ENCODE measurements at regions of chr2 and their contacts with region 1.

Region 1: GRCh38 chr2:56183643-56184499 is at the start of gene CCDC85A:
- DNase-seq: peak; percentile 46
- ATAC-seq: peak; percentile 99
- H3K4me3 ChIP-seq: peak within 1 kb of the TSS; percentile 17 to 70 (median 47); a peak in 4 of 6 replicates
- H3K27ac ChIP-seq: no peak within 1 kb of the TSS
- H3K4me1 ChIP-seq: 0 out of 2 replicates have a peak, but pooled peaks cover 5% of the 10 kb centered on the region
- H3K27me3 ChIP-seq: peaks cover 11 to 48% of the 10 kb centered on the region in 2 experiments
- CTCF ChIP-seq: peak; percentile 97
- EP300 ChIP-seq: no peak
- POLR2A ChIP-seq: no peak
- RAD21 ChIP-seq: peak; percentile 93
- total RNA-seq, gene CCDC85A: not detected in 2 replicates

Region 2: DNA sequence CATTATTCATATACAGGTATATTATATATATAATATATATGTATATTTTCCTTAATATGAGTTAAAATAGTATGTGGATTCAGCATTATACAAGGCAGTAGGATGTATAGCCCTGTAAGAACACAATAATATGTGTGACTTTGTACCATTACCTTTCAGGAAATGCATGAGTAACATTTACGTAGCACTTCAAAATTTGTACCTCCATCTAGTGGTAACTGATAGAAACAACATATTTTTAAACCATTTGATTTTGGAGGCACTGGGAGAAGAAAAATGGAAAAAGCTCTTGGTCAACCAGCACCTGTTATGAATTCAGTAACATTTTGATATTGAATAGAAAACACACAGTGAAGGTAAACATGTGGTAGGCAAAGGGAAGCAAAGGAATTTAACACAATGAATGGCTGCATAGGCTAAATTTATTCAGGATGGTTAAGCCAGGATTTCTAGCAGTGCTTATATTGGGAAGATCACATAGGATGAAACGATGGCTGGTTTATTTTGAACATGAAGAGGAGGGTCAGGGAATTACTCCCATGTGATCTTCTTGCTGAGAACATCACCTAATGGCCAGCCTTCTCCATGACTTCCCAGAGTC is 565.4 kb after region 1 on chr2:
- CTCF ChIA-PET with region 1: interaction called, 12 read pairs
- POLR2A ChIA-PET with region 1: no interaction called
- in situ Hi-C with region 1: no loop called
- intact Hi-C with region 1: loop called (anchors 1 kb)
- DNase-seq: peak; percentile 18
- ATAC-seq: peak; percentile 27; the same call in 1 of the 3 replicates
- H3K4me3 ChIP-seq: no peak overlapping the region
- H3K27ac ChIP-seq: no peak overlapping the region
- H3K4me1 ChIP-seq: no peaks in the 10 kb centered on the region
- H3K27me3 ChIP-seq: no peaks in the 10 kb centered on the region
- CTCF ChIP-seq: peak; percentile 46
- EP300 ChIP-seq: no peak
- POLR2A ChIP-seq: no peak
- RAD21 ChIP-seq: no peak

Region 3: GRCh38 chr2:57497489-57498096 is 1313.7 kb after region 1 on chr2:
- CTCF ChIA-PET with region 1: interaction called, 13 read pairs
- POLR2A ChIA-PET with region 1: no interaction called
- in situ Hi-C with region 1: no loop called
- intact Hi-C with region 1: loop called (anchors 5 kb)
- DNase-seq: peak; percentile 50
- ATAC-seq: peak; percentile 88
- H3K4me3 ChIP-seq: no peak overlapping the region
- H3K27ac ChIP-seq: no peak overlapping the region
- H3K4me1 ChIP-seq: no peaks in the 10 kb centered on the region
- H3K27me3 ChIP-seq: no peaks in the 10 kb centered on the region; a peak in 1 of 5 replicates
- CTCF ChIP-seq: peak; percentile 78
- EP300 ChIP-seq: no peak
- POLR2A ChIP-seq: no peak
- RAD21 ChIP-seq: peak; percentile 41; the same call in 1 of the 2 replicates

Region 4: DNA sequence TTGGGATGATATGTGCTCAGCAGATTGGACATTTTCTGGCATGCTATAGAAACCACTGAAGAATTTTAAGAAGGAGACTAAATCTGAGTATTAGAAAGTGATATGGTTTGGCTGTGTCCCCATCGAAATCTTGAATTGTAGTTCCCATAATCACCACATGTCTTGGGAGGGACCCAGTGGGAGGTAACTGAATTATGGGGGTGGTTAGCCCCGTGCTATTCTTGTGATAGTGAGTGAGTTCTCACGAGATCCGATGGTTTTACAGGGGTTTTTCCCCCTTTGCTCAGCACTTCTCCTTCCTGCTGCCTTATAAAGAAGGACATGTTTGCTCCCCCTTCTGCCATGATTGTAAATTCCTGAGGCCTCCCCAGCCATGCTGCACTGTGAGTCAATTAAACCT is 1326.8 kb after region 1 on chr2:
- CTCF ChIA-PET with region 1: no interaction called
- POLR2A ChIA-PET with region 1: no interaction called
- in situ Hi-C with region 1: loop called (anchors 5 kb)
- intact Hi-C with region 1: no loop called
- DNase-seq: no peak
- ATAC-seq: peak; percentile 57; the same call in 1 of the 3 replicates
- H3K4me3 ChIP-seq: no peak overlapping the region
- H3K27ac ChIP-seq: no peak overlapping the region
- H3K4me1 ChIP-seq: no peaks in the 10 kb centered on the region
- H3K27me3 ChIP-seq: no peaks in the 10 kb centered on the region
- CTCF ChIP-seq: no peak
- EP300 ChIP-seq: no peak
- POLR2A ChIP-seq: no peak
- RAD21 ChIP-seq: no peak

Region 5: DNA sequence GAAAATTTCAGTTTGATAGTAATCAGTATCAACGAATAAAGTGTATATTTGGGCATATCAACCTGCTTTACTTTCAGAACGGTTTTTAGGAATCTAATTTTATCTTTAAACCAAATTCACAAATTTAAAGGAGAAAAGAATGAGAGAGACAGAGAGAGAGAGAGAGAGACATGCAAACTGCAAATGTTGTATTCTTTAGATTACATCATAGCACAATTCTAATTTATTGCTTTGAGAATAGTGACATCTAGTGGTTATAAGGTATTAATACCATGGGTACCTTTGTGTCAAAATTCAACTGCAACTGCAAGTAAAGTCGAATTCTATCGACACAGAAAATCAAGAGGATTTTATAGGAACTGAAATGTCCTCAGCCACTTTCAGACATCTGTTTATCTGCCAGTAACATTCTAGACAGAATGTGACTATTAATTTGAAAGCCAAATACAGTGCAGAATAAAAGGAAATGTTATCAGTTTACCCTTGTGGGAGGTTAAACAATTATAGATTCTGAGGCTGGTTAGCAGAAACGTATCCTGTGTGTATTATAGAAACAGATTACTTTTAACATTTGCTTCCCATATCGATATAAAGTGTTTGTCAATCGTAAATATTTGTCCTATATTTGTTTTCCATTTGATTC is 1332.9 kb after region 1 on chr2:
- CTCF ChIA-PET with region 1: interaction called, 11 read pairs
- POLR2A ChIA-PET with region 1: no interaction called
- in situ Hi-C with region 1: loop called (anchors 5 kb)
- intact Hi-C with region 1: loop called (anchors 1 kb)
- DNase-seq: peak; percentile 36
- ATAC-seq: peak; percentile 69
- H3K4me3 ChIP-seq: no peak overlapping the region
- H3K27ac ChIP-seq: no peak overlapping the region
- H3K4me1 ChIP-seq: no peaks in the 10 kb centered on the region
- H3K27me3 ChIP-seq: no peaks in the 10 kb centered on the region
- CTCF ChIP-seq: peak; percentile 71
- EP300 ChIP-seq: no peak
- POLR2A ChIP-seq: no peak
- RAD21 ChIP-seq: peak; percentile 54; the same call in 1 of the 2 replicates